ENCODE measurements at regions of chr20 and their contacts with region 1.

Region 1: DNA sequence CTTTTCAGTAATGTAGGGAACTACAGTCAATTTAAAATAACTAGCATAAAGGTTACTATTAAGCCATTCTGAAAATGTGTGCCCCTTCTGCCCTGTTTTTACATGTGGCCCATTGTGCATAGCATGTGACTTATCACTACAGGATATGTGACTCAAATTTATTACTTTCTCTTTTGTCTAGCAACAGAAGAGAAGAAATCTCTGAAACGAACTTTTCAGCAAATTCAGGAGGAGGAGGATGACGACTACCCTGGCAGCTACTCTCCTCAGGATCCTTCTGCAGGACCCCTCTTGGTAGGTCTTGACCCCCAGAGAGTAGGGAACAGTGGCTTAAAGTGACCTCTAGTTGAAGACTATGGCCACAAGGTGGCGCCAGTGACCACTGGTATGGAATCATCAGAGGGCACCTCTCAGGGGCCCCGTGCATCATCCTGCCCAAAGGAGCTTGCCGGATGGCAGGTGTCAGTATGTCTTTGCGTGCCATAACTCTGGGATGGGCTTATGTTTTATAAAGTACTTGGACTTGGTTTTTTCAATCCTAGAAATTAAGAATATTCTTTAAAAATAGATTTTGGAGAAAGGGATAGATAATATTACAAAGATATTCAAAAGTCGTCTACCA is 23.9 kb downstream of the RPRD1B start:
- DNase-seq: peak; percentile 92
- H3K27ac ChIP-seq: no peak overlapping the region
- CTCF ChIP-seq: peak; percentile 97

Region 2: GRCh38 chr20:38043512-38044300 is 13.8 kb before region 1 on chr20:
- CTCF ChIA-PET with region 1: interaction called, 15 read pairs
- POLR2A ChIA-PET with region 1: no interaction called
- DNase-seq: peak; percentile 99
- H3K27ac ChIP-seq: peak overlapping the region; percentile 37
- CTCF ChIP-seq: no peak

Region 3: GRCh38 chr20:38091441-38092216 is 34.2 kb after region 1 on chr20:
- CTCF ChIA-PET with region 1: no interaction called
- POLR2A ChIA-PET with region 1: no interaction called
- DNase-seq: no peak
- H3K27ac ChIP-seq: no peak overlapping the region
- CTCF ChIP-seq: no peak

Region 4: GRCh38 chr20:38113401-38114325 is 56.2 kb after region 1 on chr20:
- CTCF ChIA-PET with region 1: no interaction called
- POLR2A ChIA-PET with region 1: no interaction called
- DNase-seq: peak; percentile 46
- H3K27ac ChIP-seq: no peak overlapping the region
- CTCF ChIP-seq: no peak; the same call in 1 of the 2 replicates